ENCODE measurements at regions of chr6 and their contacts with region 1.

Region 1: DNA sequence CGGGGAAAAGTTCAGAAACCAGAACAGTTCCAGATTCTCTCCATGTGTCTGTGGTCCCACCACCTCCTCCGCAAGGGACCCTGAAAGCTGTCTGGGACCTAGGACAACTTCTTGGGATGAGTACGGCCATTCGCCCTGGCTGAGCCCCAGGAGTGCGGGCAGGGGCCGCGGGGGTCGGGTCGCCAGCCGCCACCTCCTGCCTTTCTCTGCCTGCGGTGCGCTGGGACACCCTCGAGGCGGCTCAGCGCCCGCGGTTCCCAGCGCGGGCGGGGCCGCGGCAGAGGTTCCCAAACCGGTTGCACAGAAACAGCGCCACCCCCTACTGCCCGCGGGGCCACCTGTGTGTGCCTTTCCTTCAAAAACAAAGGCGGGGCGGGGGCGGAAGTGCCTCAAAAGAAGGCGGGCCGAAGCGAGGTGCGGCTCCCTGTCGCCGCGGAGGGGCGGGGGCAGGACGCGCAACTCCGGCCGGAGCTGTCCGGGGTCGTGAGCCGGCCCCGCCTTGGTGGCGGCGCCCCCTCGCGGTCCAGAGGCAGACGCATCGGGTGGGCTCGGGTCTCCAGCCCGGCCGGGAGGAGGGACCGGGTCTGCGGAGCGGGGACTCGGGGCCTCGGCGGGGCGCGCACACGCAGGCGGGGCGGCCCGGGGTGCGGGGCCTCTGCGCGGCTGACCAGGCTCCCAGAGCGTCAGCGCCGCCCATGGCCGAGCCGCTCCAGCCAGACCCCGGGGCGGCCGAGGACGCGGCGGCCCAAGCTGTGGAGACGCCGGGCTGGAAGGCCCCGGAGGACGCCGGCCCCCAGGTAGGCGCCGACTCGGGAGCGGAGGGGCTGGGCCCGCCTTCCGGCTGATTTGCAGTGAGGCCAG is at the start of gene HEBP2:
- DNase-seq: peak; percentile 96
- H3K4me3 Mint-ChIP-seq: peak within 1 kb of the TSS; percentile 80
- H3K27ac Mint-ChIP-seq: peak within 1 kb of the TSS; percentile 77
- H3K4me1 Mint-ChIP-seq: peaks cover 11% of the 10 kb centered on the region
- H3K27me3 Mint-ChIP-seq: no peaks in the 10 kb centered on the region
- CTCF ChIP-seq: peak; percentile 12
- total RNA-seq, gene HEBP2: 71.2 and 89.7 TPM in 2 replicates

Region 2: GRCh38 chr6:138161338-138162110 is 242.5 kb before region 1 on chr6 and contains the start of gene ARFGEF3:
- CTCF ChIA-PET with region 1: no interaction called
- POLR2A ChIA-PET with region 1: interaction called, 5 read pairs
- intact Hi-C with region 1: loop called (anchors 5 kb)
- DNase-seq: peak; percentile 68
- H3K4me3 Mint-ChIP-seq: peak within 1 kb of the TSS; percentile 68
- H3K27ac Mint-ChIP-seq: no peak within 1 kb of the TSS
- H3K4me1 Mint-ChIP-seq: no peaks in the 10 kb centered on the region
- H3K27me3 Mint-ChIP-seq: peaks cover 40% of the 10 kb centered on the region
- CTCF ChIP-seq: no peak
- total RNA-seq, gene ARFGEF3: 3.4 and 7.0 TPM in 2 replicates

Region 3: DNA sequence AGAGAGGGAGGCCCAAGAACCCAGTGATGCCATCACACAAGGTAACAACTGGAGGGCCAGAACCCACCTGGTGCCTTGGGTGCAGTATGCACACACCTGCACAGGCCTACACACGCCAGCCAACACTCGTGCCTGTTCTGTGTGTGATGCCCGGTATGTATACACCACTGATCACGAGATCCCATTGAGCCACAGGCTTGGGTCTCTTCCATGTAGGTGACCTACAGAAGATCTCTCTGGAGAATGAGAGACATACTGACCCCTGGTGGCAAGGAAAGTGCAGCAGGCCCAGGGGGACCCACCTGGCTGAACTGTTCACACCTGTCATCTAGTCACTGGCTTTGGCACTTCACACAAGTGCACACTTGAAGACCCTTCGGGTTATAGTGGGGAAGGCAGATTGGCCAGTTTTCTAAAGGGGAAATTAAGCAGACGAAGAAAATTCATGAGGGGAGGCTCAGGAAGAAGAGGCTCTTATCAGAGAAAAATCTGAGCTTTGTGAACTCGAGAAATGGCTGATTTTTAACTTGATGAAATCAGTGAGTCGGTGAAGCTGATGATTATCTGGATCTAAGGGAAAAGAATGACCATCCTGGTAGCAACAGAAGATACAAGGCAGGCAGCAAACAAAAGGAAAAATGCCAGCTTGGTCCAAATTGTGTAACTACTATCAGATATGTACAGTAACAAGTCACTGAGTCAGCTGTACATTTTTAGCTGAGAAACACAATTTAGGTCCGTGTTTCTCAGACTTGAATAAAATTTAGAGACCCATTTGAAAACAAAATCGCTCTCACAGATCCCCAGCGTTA is 116.7 kb before region 1 on chr6:
- CTCF ChIA-PET with region 1: no interaction called
- POLR2A ChIA-PET with region 1: no interaction called
- intact Hi-C with region 1: loop called (anchors 2 kb)
- DNase-seq: peak; percentile 61
- H3K4me3 Mint-ChIP-seq: no peak overlapping the region
- H3K27ac Mint-ChIP-seq: peak overlapping the region; percentile 81
- H3K4me1 Mint-ChIP-seq: peaks cover 20% of the 10 kb centered on the region
- H3K27me3 Mint-ChIP-seq: no peaks in the 10 kb centered on the region
- CTCF ChIP-seq: peak; percentile 40